K562 (cell line): ENCODE measurements at regions of chr18 and their contacts with region 1.

Region 1: GRCh38 chr18:6729247-6730091 is at the start of gene ARHGAP28:
- DNase-seq: peak; percentile 88 to 91 (median 91)
- ATAC-seq: peak; percentile 97
- H3K4me3 ChIP-seq: peak within 1 kb of the TSS; percentile 61
- H3K27ac ChIP-seq: peak within 1 kb of the TSS; percentile 56
- H3K4me1 ChIP-seq: peaks cover 3 to 11% of the 10 kb centered on the region in 2 experiments; a peak in 3 of 5 replicates
- H3K27me3 ChIP-seq: no peaks in the 10 kb centered on the region
- CTCF ChIP-seq: peak; percentile 45 to 74 (median 60); a peak in 5 of 6 replicates
- EP300 ChIP-seq: no peak
- POLR2A ChIP-seq: peak; percentile 61
- RAD21 ChIP-seq: peak; percentile 18 to 50; a peak in 3 of 4 replicates
- polyA plus RNA-seq, gene ARHGAP28: 0.93 to 2.6 TPM

Region 2: DNA sequence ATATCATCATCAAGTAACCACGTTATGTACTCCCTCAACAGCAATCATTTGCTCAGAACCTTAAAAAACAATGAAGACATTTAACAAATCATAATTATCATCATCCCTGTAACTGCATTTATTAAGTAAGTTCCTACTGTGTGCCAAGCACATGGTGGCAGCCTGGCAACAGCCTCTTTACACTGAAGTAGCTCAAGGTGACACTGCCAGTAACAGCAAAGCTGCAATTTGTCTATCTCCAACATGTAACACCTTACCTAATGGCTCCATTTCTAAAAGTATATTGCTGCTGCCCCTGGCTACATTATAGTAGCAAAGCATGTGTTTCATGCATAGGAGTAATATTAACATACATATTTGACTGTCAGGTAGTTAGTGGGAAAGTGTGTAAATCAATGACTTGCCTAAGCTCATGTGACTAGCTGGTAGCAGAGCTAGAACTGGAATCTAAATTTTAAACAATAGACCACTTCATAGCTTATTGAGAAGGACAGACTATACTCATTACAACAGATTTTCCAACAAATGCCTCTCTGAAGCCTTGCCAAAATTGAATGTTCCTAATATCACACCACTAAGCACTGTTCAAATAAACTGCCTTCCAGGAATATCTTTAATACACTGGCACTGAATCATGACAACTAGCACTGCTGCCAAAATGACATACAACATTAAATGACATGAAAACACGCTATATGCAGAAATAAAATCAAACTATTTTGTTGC is 401.4 kb before region 1 on chr18:
- CTCF ChIA-PET with region 1: no interaction called
- POLR2A ChIA-PET with region 1: no interaction called
- in situ Hi-C with region 1: no loop called
- intact Hi-C with region 1: no loop called
- DNase-seq: no peak
- ATAC-seq: no peak
- H3K4me3 ChIP-seq: no peak overlapping the region
- H3K27ac ChIP-seq: no peak overlapping the region
- H3K4me1 ChIP-seq: no peaks in the 10 kb centered on the region
- H3K27me3 ChIP-seq: no peaks in the 10 kb centered on the region
- CTCF ChIP-seq: no peak
- EP300 ChIP-seq: no peak
- POLR2A ChIP-seq: no peak
- RAD21 ChIP-seq: no peak

Region 3: GRCh38 chr18:6683112-6683876 is 46.2 kb before region 1 on chr18:
- CTCF ChIA-PET with region 1: no interaction called
- POLR2A ChIA-PET with region 1: no interaction called
- in situ Hi-C with region 1: no loop called
- intact Hi-C with region 1: loop called (anchors 2 kb)
- DNase-seq: peak; percentile 96 to 100 (median 98)
- ATAC-seq: peak; percentile 93
- H3K4me3 ChIP-seq: peak overlapping the region; percentile 52
- H3K27ac ChIP-seq: peak overlapping the region; percentile 87
- H3K4me1 ChIP-seq: peaks cover 9 to 31% of the 10 kb centered on the region in 2 experiments; a peak in 3 of 5 replicates
- H3K27me3 ChIP-seq: no peaks in the 10 kb centered on the region
- CTCF ChIP-seq: peak in 2 of 3 experiments; percentile 38 to 51; a peak in 4 of 6 replicates
- EP300 ChIP-seq: peak; percentile 84
- POLR2A ChIP-seq: peak; percentile 93
- RAD21 ChIP-seq: peak; percentile 58 to 61

Region 4: DNA sequence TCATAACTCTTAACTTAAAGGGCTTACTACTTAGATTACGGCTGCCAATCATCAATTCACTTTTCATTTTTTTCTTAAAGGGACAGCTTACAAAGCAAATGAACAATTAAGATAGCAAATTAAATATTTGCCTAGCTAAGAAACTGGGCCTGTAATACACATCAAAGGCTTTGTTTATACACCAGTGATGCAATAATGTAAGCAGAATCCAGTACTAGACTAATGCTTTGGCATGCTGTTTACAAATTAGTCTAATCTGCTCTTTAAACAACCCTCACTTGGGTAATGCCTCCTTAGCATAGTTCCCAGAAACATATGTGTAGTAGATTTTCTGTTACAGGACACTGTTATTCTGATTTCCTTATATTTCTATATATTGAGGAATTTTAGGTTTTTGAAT is 105.9 kb after region 1 on chr18:
- CTCF ChIA-PET with region 1: no interaction called
- POLR2A ChIA-PET with region 1: no interaction called
- in situ Hi-C with region 1: no loop called
- intact Hi-C with region 1: no loop called
- DNase-seq: no peak
- ATAC-seq: no peak
- H3K4me3 ChIP-seq: no peak overlapping the region
- H3K27ac ChIP-seq: no peak overlapping the region
- H3K4me1 ChIP-seq: peaks cover 0 to 10% of the 10 kb centered on the region in 2 experiments; a peak in 2 of 5 replicates
- H3K27me3 ChIP-seq: no peaks in the 10 kb centered on the region
- CTCF ChIP-seq: no peak
- EP300 ChIP-seq: no peak
- POLR2A ChIP-seq: no peak
- RAD21 ChIP-seq: no peak